ENCODE measurements at regions of chr18 and their contacts with region 1.

Region 1: DNA sequence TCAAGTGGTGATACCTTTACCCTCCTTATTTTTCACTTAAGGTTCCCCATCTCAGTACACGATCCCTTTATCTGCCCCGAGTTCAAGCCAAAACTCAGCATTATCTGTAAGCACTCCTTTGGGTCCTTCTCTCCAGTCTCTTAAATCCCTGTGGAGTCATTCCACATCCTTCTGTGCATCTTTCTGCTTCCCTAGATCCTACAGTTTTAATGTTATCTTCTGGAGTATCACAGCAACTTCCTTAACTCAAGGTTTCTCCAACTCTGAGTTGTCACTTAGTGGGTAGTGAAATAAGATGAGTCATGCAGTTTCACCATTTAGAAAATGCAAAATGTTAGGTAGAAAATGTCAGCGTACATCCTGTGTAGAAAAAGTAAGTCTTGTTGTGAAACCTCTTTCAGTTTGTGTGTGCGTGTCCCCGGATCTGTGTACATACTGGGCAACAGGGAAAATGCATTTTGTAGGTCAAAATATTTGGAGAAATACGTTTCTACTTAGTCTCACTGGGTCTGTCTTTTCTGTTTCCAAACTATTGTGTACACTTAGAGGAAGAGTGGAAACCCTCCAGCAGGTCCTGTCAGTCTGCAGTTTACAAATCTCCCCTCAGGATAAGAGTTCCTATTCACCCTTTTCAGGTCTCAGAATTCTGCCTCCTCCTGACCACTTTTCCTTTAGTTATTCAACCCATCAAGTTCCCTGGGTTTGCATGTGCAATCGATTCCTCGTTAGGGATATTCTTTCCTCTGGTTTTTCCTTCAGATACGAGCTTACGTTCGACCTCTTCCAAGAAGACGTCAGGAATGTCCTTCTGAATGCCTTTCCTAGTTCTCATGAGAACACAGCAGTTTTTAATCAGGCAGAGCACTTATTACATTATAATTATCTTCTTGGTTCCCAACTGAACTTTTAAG is 154.8 kb downstream of the TGIF1 start:
- DNase-seq: peak; percentile 26

Region 2: DNA sequence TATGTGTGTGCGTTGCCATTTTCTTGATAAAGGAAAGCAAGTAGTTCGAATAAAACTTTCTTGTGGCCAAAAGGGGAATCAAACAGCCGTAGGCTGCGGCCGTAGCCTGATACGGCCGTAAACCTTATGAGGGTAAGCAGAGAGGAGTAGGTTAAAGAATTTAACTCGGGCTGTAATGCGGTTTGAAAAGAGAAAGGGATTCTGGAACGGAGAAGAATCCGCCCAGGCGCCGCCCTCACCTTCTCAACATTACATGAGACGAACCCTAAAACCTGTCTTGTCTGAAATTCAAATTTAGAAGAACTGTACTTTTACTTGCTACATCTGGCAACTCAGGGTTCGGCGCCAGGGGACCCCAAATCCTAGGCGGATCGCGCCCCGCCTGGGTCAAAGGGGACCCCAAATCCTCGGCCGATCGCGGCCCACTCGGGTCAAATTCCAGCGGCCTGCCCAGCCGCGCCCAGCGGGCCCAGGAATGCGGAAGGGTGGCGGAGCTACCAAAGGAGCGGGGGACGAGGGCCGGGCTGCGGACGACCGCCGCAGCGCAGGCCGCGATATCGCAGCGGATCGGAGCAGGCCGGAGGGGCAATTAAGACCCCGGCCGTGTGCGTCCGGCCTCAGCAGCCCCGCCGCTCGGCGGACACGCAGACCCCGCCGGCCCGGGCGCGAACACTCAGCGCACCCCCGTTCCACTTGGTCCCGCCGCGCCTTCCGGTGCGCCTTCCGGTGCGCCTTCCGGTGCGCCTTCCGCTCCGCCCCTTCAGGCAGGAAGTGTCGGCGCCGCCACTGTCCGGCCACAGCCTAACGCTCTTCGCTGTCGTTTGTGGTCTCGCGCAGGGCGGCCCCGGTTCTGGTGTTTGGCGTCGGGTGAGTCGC is 343.1 kb before region 1 on chr18 and contains the start of gene MYL12B:
- intact Hi-C with region 1: loop called (anchors 5 kb)
- DNase-seq: peak; percentile 93
- total RNA-seq, gene MYL12B: 228 TPM

Region 3: DNA sequence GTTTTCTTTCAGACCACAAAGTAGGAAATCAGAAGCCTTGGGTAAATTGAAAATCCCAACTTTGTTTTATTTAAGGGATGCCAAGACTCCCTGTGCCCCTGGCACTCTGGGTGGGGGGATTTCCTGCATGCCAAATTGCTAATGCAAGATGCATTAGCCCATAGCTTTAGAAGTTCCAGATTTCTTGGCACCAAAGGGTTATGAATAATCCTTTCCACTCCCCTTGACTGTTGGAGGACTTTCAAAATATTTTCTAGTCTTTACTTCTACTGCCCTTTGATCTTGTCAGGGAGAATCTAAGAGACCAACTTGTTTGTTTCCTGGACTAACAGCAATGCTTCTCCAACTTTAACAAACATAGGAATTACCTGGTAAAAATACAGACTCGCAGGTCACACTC is 236.6 kb before region 1 on chr18:
- intact Hi-C with region 1: no loop called
- DNase-seq: no peak

Region 4: DNA sequence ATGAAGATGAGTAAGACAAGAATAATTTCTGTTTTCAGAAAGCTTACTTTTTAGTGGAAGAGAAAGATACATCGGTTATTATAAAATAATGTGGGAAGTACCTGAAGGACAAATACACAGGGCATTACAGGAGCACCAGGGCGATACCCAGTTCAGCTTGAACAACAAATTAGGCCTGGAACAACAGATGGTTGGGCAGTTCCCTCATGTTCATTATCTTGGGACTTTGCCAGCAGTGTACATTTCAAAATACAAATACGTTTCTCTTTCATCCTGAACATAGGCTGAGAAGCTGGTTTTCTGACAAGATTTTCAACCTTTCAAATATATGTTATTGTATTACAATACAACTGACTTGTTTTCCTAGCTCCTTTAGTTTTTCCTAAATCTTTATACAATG is 75.2 kb before region 1 on chr18:
- intact Hi-C with region 1: no loop called
- DNase-seq: no peak

Region 5: GRCh38 chr18:3832025-3832638 is 227.4 kb after region 1 on chr18:
- intact Hi-C with region 1: no loop called
- DNase-seq: no peak